ENCODE measurements at regions of chr5 and their contacts with region 1.

Region 1: DNA sequence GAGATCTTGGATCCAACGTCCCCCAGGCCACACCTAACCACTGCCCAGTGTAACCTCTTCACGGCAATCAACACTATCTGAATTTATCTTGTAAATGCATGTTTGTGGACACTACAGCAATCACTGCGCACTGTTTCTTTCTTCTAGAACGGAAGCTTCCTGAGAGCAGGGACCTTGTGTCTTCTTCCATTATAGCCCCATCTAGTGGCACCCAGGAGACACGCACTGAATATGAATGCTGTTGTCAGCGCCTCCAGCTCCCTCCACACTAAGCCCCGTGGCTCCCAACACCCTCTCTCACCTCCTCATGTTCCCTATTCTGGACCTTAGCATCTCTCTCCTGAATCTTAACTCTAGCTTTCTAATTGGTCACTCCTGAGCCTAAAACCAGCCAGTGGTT is 72.7 kb downstream of the SMIM23 start:
- DNase-seq: peak; percentile 38 to 48
- ATAC-seq: peak; percentile 60 to 78; a peak in 5 of 6 replicates
- H3K4me3 ChIP-seq: no peak overlapping the region
- H3K27ac ChIP-seq: no peak overlapping the region
- H3K4me1 ChIP-seq: no peaks in the 10 kb centered on the region
- CTCF ChIP-seq: peak; percentile 46
- EP300 ChIP-seq: no peak
- POLR2A ChIP-seq: no peak
- RAD21 ChIP-seq: peak; percentile 27 to 42; a peak in 2 of 5 replicates

Region 2: DNA sequence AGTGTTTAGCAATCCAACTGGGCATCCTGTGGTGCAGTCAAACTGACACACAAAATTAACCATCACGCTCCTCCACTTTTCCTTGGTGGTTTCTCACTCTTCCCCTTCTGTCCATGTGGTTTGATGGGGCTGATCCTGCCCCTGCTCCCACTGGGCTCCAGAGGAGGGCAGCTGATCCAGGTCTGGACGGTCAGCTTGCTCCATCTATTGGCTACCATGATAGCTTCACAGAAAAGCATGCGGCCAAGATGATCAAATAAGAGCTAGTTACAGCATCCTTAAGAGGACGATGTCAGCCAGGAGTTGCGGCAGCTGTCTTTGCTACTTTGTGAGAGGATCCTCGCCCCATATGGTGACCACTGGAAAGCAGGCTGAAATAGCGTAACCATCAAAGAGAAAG is 1026.0 kb before region 1 on chr5:
- CTCF ChIA-PET with region 1: no interaction called
- POLR2A ChIA-PET with region 1: no interaction called
- DNase-seq: no peak
- ATAC-seq: peak; percentile 42 to 63; a peak in 4 of 6 replicates
- H3K4me3 ChIP-seq: no peak overlapping the region
- H3K27ac ChIP-seq: no peak overlapping the region
- H3K4me1 ChIP-seq: no peaks in the 10 kb centered on the region
- CTCF ChIP-seq: no peak
- EP300 ChIP-seq: no peak
- POLR2A ChIP-seq: no peak
- RAD21 ChIP-seq: no peak

Region 3: GRCh38 chr5:171640480-171640879 is 217.8 kb before region 1 on chr5:
- CTCF ChIA-PET with region 1: no interaction called
- POLR2A ChIA-PET with region 1: no interaction called
- DNase-seq: no peak
- ATAC-seq: no peak
- H3K4me3 ChIP-seq: no peak overlapping the region
- H3K27ac ChIP-seq: no peak overlapping the region
- H3K4me1 ChIP-seq: no peaks in the 10 kb centered on the region
- CTCF ChIP-seq: no peak
- EP300 ChIP-seq: no peak
- POLR2A ChIP-seq: no peak
- RAD21 ChIP-seq: no peak

Region 4: DNA sequence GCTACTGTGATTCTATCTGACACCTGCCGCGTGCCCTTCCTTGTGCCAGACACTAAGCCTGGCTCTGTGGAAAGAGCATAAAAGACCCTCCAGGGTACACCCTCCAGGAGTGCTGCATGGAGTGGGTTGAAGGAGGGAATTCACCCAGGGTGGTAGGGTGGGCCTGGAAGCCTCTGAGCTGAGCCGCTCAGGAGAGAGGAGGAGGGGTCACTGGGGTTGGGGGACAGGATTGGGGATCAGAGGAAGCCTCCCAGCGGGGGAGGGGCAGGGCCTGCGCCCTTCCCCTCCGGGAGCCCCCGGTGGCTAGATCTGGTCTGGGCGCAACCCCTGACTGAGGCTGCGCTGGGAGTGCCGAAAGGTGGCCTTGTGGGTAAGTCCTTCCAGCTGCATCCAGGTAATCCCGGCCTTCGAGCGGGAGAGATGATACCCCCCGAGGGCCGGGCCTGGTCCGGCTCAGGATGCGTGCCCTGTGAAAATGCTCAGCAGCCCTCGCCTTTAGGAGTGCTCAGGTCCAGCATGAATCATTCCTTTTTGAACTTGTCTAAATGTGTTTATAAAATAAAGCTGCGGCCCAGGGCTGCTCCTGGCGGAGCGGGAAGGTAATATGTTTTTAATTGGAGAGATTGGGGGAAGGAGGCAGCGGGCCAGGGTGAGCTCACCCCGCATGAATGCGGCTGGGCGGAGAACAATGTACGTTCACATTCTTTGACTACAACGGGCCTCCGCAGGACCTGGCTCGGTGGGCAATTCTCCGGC is 190.8 kb before region 1 on chr5:
- CTCF ChIA-PET with region 1: no interaction called
- POLR2A ChIA-PET with region 1: no interaction called
- DNase-seq: no peak
- ATAC-seq: no peak
- H3K4me3 ChIP-seq: no peak overlapping the region
- H3K27ac ChIP-seq: no peak overlapping the region
- H3K4me1 ChIP-seq: no peaks in the 10 kb centered on the region
- CTCF ChIP-seq: no peak
- EP300 ChIP-seq: no peak
- POLR2A ChIP-seq: no peak
- RAD21 ChIP-seq: no peak

Region 5: GRCh38 chr5:171874234-171874633 is 15.9 kb after region 1 on chr5:
- CTCF ChIA-PET with region 1: interaction called, 10 read pairs
- POLR2A ChIA-PET with region 1: no interaction called
- DNase-seq: no peak
- ATAC-seq: no peak
- H3K4me3 ChIP-seq: no peak overlapping the region
- H3K27ac ChIP-seq: no peak overlapping the region
- H3K4me1 ChIP-seq: no peaks in the 10 kb centered on the region
- CTCF ChIP-seq: no peak
- EP300 ChIP-seq: no peak
- POLR2A ChIP-seq: no peak
- RAD21 ChIP-seq: no peak